HepG2 (cell line): ENCODE measurements at regions of chr12 and their contacts with region 1.

Region 1: GRCh38 chr12:54359033-54359761 is 5.1 kb downstream of the GPR84 start:
- DNase-seq: peak; percentile 98
- ATAC-seq: peak; percentile 95
- H3K4me3 ChIP-seq: peak overlapping the region; percentile 75 to 81 (median 78)
- H3K27ac ChIP-seq: peak overlapping the region; percentile 52
- H3K4me1 ChIP-seq: peaks cover 42% of the 10 kb centered on the region
- H3K27me3 ChIP-seq: no peaks in the 10 kb centered on the region; a peak in 1 of 5 replicates
- CTCF ChIP-seq: no peak
- EP300 ChIP-seq: peak in 1 of 2 experiments; percentile 41; a peak in 1 of 4 replicates
- POLR2A ChIP-seq: peak in 1 of 2 experiments; percentile 41
- RAD21 ChIP-seq: no peak

Region 2: GRCh38 chr12:54220092-54220557 is 139.1 kb before region 1 on chr12:
- CTCF ChIA-PET with region 1: interaction called, 22 read pairs
- POLR2A ChIA-PET with region 1: no interaction called
- in situ Hi-C with region 1: loop called (anchors 5 kb)
- intact Hi-C with region 1: loop called (anchors 1 kb)
- DNase-seq: peak; percentile 45
- ATAC-seq: peak; percentile 76
- H3K4me3 ChIP-seq: no peak overlapping the region
- H3K27ac ChIP-seq: no peak overlapping the region
- H3K4me1 ChIP-seq: peaks cover 32% of the 10 kb centered on the region
- H3K27me3 ChIP-seq: peaks cover 2 to 26% of the 10 kb centered on the region in 2 experiments
- CTCF ChIP-seq: peak; percentile 87
- EP300 ChIP-seq: no peak
- POLR2A ChIP-seq: no peak
- RAD21 ChIP-seq: no peak; the same call in 1 of the 2 replicates

Region 3: GRCh38 chr12:54279866-54280467 is 79.2 kb before region 1 on chr12 and contains the start of gene CBX5:
- CTCF ChIA-PET with region 1: no interaction called
- POLR2A ChIA-PET with region 1: interaction called, 53 read pairs
- in situ Hi-C with region 1: no loop called
- intact Hi-C with region 1: no loop called
- DNase-seq: peak; percentile 98
- ATAC-seq: peak; percentile 39
- H3K4me3 ChIP-seq: peak within 1 kb of the TSS; percentile 73 to 79 (median 76)
- H3K27ac ChIP-seq: peak within 1 kb of the TSS; percentile 96
- H3K4me1 ChIP-seq: peaks cover 64% of the 10 kb centered on the region
- H3K27me3 ChIP-seq: no peaks in the 10 kb centered on the region; a peak in 1 of 5 replicates
- CTCF ChIP-seq: no peak
- EP300 ChIP-seq: no peak
- POLR2A ChIP-seq: peak in 1 of 2 experiments; percentile 46; a peak in 2 of 4 replicates
- RAD21 ChIP-seq: 0 out of 2 replicates have a peak, but pooled peaks have one; percentile 19
- total RNA-seq, gene CBX5: 22.2 and 45.4 TPM in 2 replicates

Region 4: DNA sequence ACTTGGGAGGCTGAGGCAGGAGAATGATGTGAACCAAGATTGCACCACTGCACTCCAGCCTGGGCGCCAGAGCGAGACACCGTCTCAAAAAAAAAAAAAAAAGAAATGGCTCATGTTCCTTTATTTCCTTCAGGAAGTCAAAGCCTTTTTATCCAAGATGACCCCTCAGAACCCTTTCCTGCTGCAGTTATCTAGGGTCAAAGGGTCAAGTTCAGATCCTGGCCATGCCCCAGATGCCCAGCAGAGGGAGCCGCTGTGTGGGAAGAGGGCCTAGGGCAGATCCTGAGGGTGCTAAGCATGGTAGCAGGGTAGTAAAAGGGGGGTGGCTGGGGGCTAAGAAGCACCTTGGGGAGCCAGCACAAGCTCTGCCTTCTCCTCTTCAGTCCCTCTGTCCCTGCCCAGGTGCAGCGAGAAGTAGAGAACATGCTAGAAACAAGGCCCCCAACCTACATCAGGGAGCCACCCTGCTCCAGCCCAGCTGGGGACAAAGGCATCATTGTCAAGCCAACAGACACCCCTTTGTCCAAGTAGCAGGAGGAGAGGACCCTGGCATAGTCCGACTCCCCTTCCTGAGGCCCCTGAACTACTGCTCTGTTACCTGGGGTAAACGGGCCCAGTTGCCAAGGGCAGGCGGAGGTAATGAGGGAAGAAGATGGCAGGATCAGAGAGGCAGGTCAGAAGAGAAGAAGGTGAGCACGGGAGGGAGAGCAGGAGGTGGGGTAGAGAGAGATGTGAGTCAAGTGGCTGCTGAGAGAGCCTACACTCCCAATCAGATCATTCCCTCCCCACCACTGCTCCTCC is 64.8 kb before region 1 on chr12:
- CTCF ChIA-PET with region 1: interaction called, 27 read pairs
- POLR2A ChIA-PET with region 1: interaction called, 6 read pairs
- in situ Hi-C with region 1: loop called (anchors 5 kb)
- intact Hi-C with region 1: loop called (anchors 1 kb)
- DNase-seq: peak; percentile 89
- ATAC-seq: peak; percentile 60
- H3K4me3 ChIP-seq: peak overlapping the region in 2 of 3 experiments; percentile 26 to 64; a peak in 3 of 6 replicates
- H3K27ac ChIP-seq: peak overlapping the region; percentile 89
- H3K4me1 ChIP-seq: peaks cover 57% of the 10 kb centered on the region
- H3K27me3 ChIP-seq: no peaks in the 10 kb centered on the region
- CTCF ChIP-seq: peak; percentile 93
- EP300 ChIP-seq: peak; percentile 45 to 70; a peak in 3 of 4 replicates
- POLR2A ChIP-seq: peak; percentile 22 to 36; a peak in 2 of 4 replicates
- RAD21 ChIP-seq: peak; percentile 84

Region 5: GRCh38 chr12:54337280-54337842 is 21.8 kb before region 1 on chr12:
- CTCF ChIA-PET with region 1: interaction called, 3 read pairs
- POLR2A ChIA-PET with region 1: interaction called, 19 read pairs
- in situ Hi-C with region 1: no loop called
- intact Hi-C with region 1: loop called (anchors 2 kb)
- DNase-seq: peak; percentile 55
- ATAC-seq: peak; percentile 66
- H3K4me3 ChIP-seq: no peak overlapping the region
- H3K27ac ChIP-seq: peak overlapping the region; percentile 12
- H3K4me1 ChIP-seq: peaks cover 70% of the 10 kb centered on the region
- H3K27me3 ChIP-seq: no peaks in the 10 kb centered on the region
- CTCF ChIP-seq: no peak
- EP300 ChIP-seq: no peak; a peak in 1 of 4 replicates
- POLR2A ChIP-seq: no peak
- RAD21 ChIP-seq: no peak